Activated CD4-positive, alpha-beta T cell treated with anti-CD3 and anti-CD28 coated beads for 36 hours (primary cell): ENCODE measurements at regions of chr4 and their contacts with region 1.

Region 1: GRCh38 chr4:121155893-121156292 is 8.2 kb downstream of the TNIP3 start:
- DNase-seq: no peak
- ATAC-seq: no peak
- H3K4me3 Mint-ChIP-seq: peak overlapping the region; percentile 4
- H3K27ac Mint-ChIP-seq: no peak overlapping the region
- H3K4me1 Mint-ChIP-seq: peaks cover 53% of the 10 kb centered on the region
- H3K27me3 Mint-ChIP-seq: peaks cover 12% of the 10 kb centered on the region

Region 2: GRCh38 chr4:121112530-121112929 is 43.4 kb before region 1 on chr4:
- CTCF ChIA-PET with region 1: no interaction called
- POLR2A ChIA-PET with region 1: no interaction called
- intact Hi-C with region 1: loop called in 1 of 2 experiments (anchors 5 kb)
- DNase-seq: no peak
- ATAC-seq: no peak
- H3K4me3 Mint-ChIP-seq: no peak overlapping the region
- H3K27ac Mint-ChIP-seq: no peak overlapping the region
- H3K4me1 Mint-ChIP-seq: peaks cover 23% of the 10 kb centered on the region
- H3K27me3 Mint-ChIP-seq: no peaks in the 10 kb centered on the region

Region 3: DNA sequence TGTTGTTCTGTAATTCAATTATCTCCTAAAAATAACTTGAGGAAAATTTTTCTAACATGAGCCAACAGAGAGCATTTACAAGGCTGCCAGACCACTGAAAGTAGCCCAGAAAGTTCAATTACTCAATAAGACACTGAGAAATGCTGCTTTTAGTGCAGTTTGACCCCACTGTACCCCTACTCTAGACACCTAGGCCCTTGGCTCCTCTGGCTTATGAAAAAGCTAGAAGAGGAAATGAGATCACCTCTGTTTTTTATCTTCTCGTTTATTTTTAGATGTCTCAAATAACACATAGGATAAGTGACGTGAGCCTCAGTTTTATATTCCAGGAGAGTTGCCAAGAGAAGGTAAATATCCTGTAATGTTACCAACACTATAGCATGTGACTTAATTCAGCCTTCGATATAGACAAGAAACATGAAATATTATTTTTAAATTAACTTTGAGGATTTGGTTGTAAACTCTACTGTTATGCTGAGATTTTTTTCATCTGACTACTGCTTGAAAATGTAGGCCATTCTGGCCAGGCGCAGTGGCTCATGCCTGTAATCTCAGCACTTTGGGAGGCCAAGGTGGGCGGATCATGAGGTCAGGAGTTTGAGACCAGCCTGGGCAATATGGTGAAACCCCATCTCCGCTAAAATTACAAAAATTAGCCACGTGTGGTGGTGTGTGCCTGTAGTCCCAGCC is 16.2 kb before region 1 on chr4:
- CTCF ChIA-PET with region 1: interaction called, 4 read pairs
- POLR2A ChIA-PET with region 1: interaction called, 4 read pairs
- intact Hi-C with region 1: loop called (anchors 1 to 2 kb)
- DNase-seq: no peak
- ATAC-seq: peak; percentile 52
- H3K4me3 Mint-ChIP-seq: no peak overlapping the region
- H3K27ac Mint-ChIP-seq: peak overlapping the region; percentile 42
- H3K4me1 Mint-ChIP-seq: peaks cover 53% of the 10 kb centered on the region
- H3K27me3 Mint-ChIP-seq: no peaks in the 10 kb centered on the region

Region 4: DNA sequence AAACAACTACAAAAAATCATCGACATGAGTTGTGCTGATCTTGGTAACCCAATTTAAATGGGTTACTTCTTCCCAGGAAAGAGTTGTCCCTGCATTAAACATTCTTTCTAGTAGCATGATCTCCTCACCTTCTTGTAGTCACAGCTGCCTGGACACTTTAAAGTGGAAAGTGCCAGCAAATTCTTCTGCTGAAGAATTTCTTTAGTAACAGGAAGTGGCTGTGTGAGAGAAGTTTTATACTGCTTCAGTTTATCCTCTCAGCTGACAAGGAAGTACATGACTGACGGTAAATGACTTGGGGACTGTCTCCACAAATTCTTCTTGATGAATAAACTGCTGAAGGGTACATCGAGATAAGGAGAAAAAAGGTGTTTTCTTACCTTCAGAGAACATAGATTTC is 26.4 kb after region 1 on chr4:
- CTCF ChIA-PET with region 1: interaction called, 3 read pairs
- POLR2A ChIA-PET with region 1: no interaction called
- intact Hi-C with region 1: loop called (anchors 2 kb)
- DNase-seq: peak; percentile 20
- ATAC-seq: peak; percentile 57
- H3K4me3 Mint-ChIP-seq: peak overlapping the region; percentile 73
- H3K27ac Mint-ChIP-seq: peak overlapping the region; percentile 93
- H3K4me1 Mint-ChIP-seq: peaks cover 70% of the 10 kb centered on the region
- H3K27me3 Mint-ChIP-seq: no peaks in the 10 kb centered on the region